ENCODE measurements at regions of chr6 and their contacts with region 1.

Region 1: GRCh38 chr6:45458672-45459071 is 80.9 kb upstream of the SUPT3H start:
- DNase-seq: no peak
- ATAC-seq: no peak
- H3K4me3 ChIP-seq: no peak overlapping the region
- H3K4me3 Mint-ChIP-seq: no peak overlapping the region
- H3K27ac ChIP-seq: no peak overlapping the region
- H3K27ac Mint-ChIP-seq: no peak overlapping the region
- H3K4me1 ChIP-seq: no peaks in the 10 kb centered on the region
- H3K4me1 Mint-ChIP-seq: peaks cover 0 to 25% (median 19%) of the 10 kb centered on the region in 3 donors
- H3K27me3 ChIP-seq: no peaks in the 10 kb centered on the region
- H3K27me3 Mint-ChIP-seq: peaks cover 0 to 6% of the 10 kb centered on the region in 2 donors

Region 2: DNA sequence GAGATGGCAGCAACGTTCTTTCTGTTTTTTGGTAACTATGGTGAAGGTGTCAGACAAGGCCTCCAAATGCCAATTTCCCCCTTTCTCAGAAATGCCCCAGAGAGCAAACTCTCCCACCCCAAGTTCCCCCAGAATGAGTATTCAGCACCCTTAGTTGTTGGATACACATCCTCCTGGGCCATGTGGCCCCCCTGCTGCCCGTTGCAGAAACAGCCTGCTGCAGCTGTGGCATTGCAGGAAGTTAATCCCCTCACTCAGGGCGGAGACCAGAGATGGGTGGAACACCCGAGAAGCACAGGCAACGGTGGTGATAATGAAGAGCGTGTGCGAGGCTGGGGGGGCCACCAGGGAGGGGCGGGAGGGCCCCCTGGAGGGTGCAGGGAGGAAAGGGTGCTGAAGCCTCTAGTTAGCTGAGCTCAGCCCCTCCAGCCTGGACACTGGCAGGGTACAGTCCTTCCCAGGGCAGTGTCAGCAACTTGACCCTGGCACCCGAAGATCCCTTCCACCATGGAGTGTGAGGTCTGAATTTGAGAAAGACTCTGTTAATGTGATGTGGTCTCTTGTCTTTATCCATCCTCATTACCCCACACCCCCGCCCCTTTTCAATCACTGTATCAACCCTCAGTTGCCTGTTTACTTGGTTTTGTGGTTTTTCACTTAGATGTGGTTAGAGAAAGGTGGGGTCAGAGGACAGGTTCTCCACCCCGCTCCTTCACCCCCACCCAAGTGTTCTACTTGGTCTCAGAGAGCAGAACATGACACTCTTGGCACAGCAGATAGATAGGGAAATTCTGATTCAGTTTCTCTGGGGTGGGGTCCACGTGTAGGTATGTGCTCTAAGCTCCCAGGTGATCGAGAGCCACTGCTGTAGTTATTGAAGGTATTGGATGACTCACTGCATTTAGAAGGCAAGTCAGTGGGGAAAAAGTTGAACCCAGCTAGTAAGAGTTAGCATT is 127.8 kb after region 1 on chr6:
- CTCF ChIA-PET with region 1: interaction called in 1 of 2 experiments, 3 read pairs
- POLR2A ChIA-PET with region 1: interaction called in 1 of 2 experiments, 13 read pairs
- DNase-seq: peak; percentile 37 to 84 (median 67)
- ATAC-seq: peak; percentile 84 to 89 (median 88)
- H3K4me3 ChIP-seq: peak overlapping the region in 1 of 2 donors; percentile 26
- H3K4me3 Mint-ChIP-seq: peak overlapping the region; percentile 66 to 76 (median 71)
- H3K27ac ChIP-seq: peak overlapping the region; percentile 55
- H3K27ac Mint-ChIP-seq: peak overlapping the region; percentile 88 to 96
- H3K4me1 ChIP-seq: peaks cover 35 to 57% of the 10 kb centered on the region in 2 experiments
- H3K4me1 Mint-ChIP-seq: peaks cover 69 to 74% (median 70%) of the 10 kb centered on the region in 3 donors
- H3K27me3 ChIP-seq: no peaks in the 10 kb centered on the region
- H3K27me3 Mint-ChIP-seq: no peaks in the 10 kb centered on the region

Measured in T-cell (primary cell).